ENCODE measurements at regions of chr2 and their contacts with region 1.

Region 1: GRCh38 chr2:152189622-152190495 is 14.3 kb upstream of the STAM2 start:
- DNase-seq: peak in 3 of 5 donors; percentile 28 to 36 (median 35)
- ATAC-seq: peak; percentile 42 to 85 (median 71)
- H3K4me3 ChIP-seq: no peak overlapping the region
- H3K27ac ChIP-seq: no peak overlapping the region
- H3K4me1 ChIP-seq: no peaks in the 10 kb centered on the region
- H3K27me3 ChIP-seq: no peaks in the 10 kb centered on the region
- CTCF ChIP-seq: peak; percentile 68 to 89 (median 86)
- POLR2A ChIP-seq: no peak

Region 2: GRCh38 chr2:152421521-152422370 is 231.9 kb after region 1 on chr2:
- intact Hi-C with region 1: loop called in 1 of 10 experiments (anchors 10 kb)
- DNase-seq: peak in 3 of 5 donors; percentile 33 to 37 (median 35)
- ATAC-seq: peak; percentile 80 to 97 (median 95)
- H3K4me3 ChIP-seq: no peak overlapping the region
- H3K27ac ChIP-seq: peak overlapping the region in 11 of 12 donors; percentile 6 to 88 (median 49)
- H3K4me1 ChIP-seq: peaks cover 3 to 50% (median 12%) of the 10 kb centered on the region in 12 donors
- H3K27me3 ChIP-seq: no peaks in the 10 kb centered on the region
- CTCF ChIP-seq: no peak
- POLR2A ChIP-seq: no peak

Region 3: GRCh38 chr2:152620208-152620607 is 430.3 kb after region 1 on chr2:
- intact Hi-C with region 1: loop called in 3 of 10 experiments (anchors 5 kb)
- DNase-seq: no peak
- ATAC-seq: no peak
- H3K4me3 ChIP-seq: no peak overlapping the region
- H3K27ac ChIP-seq: peak overlapping the region in 1 of 12 donors; percentile 61
- H3K4me1 ChIP-seq: no peaks in the 10 kb centered on the region
- H3K27me3 ChIP-seq: no peaks in the 10 kb centered on the region
- CTCF ChIP-seq: no peak
- POLR2A ChIP-seq: no peak

Region 4: DNA sequence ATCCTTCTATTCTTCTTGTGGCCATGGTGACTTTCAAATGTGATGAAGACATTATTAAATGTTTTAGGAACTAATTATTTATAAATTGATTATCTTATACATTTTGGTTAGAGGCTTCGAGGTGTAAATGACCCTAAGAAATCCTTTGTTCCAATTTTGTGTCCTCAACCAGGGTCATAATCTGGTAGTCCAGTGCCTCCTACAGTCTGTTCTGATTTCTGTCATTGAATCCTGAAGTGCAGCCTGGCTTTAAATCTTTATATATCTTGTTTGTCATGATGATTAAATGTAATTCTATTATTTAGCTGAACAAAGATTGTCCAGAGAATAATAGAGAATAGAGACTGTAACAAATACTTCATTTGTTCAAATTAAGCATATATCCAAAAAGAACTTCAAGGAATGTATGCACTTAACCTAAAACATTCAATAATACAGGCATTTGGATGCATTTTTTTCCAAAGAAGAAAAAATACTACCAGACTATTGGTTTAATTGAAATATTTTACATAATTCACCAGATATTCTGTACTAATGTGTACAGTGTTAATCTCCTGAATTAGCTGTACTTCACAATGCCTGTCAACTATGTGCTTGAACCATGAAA is 437.6 kb after region 1 on chr2:
- intact Hi-C with region 1: loop called in 8 of 10 experiments (anchors 2 to 5 kb)
- DNase-seq: no peak
- ATAC-seq: peak in 3 of 4 donors; percentile 57 to 71 (median 68)
- H3K4me3 ChIP-seq: no peak overlapping the region
- H3K27ac ChIP-seq: no peak overlapping the region
- H3K4me1 ChIP-seq: peaks cover 0 to 4% (median 0%) of the 10 kb centered on the region in 12 donors
- H3K27me3 ChIP-seq: no peaks in the 10 kb centered on the region
- CTCF ChIP-seq: peak; percentile 41 to 75 (median 62)
- POLR2A ChIP-seq: no peak

Region 5: GRCh38 chr2:152635635-152636298 is 445.9 kb after region 1 on chr2:
- intact Hi-C with region 1: loop called in 5 of 10 experiments (anchors 2 to 5 kb)
- DNase-seq: peak in 3 of 5 donors; percentile 39 to 54 (median 41)
- ATAC-seq: peak in 3 of 4 donors; percentile 55 to 63 (median 63)
- H3K4me3 ChIP-seq: no peak overlapping the region
- H3K27ac ChIP-seq: no peak overlapping the region
- H3K4me1 ChIP-seq: peaks cover 0 to 7% (median 0%) of the 10 kb centered on the region in 12 donors
- H3K27me3 ChIP-seq: no peaks in the 10 kb centered on the region
- CTCF ChIP-seq: peak; percentile 70 to 89 (median 80)
- POLR2A ChIP-seq: no peak

Region 6: GRCh38 chr2:152950126-152950525 is 760.3 kb after region 1 on chr2:
- intact Hi-C with region 1: no loop called
- DNase-seq: no peak
- ATAC-seq: no peak
- H3K4me3 ChIP-seq: no peak overlapping the region
- H3K27ac ChIP-seq: no peak overlapping the region
- H3K4me1 ChIP-seq: no peaks in the 10 kb centered on the region
- H3K27me3 ChIP-seq: no peaks in the 10 kb centered on the region
- CTCF ChIP-seq: no peak
- POLR2A ChIP-seq: no peak

Region 7: DNA sequence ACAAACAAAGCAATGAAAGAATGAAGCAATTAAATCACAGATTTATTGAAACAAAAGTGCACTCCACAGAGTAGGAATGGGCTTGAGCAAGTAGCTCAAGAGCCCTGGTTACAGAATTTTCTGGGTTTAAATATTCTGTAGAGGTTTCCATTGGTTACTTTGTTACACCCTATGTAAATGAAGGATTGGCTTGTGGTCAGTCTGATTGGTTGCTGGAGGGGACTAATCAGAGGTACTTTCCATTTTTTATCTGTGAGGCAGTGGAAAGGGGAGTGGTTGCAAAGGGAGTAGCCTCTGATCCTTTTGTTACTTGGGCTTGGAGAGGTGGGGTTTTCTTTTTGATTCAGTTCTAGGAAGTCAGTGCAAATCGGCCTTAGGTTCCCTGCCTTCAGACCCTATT is 781.8 kb after region 1 on chr2:
- intact Hi-C with region 1: no loop called
- DNase-seq: no peak
- ATAC-seq: no peak
- H3K4me3 ChIP-seq: no peak overlapping the region
- H3K27ac ChIP-seq: no peak overlapping the region
- H3K4me1 ChIP-seq: no peaks in the 10 kb centered on the region
- H3K27me3 ChIP-seq: no peaks in the 10 kb centered on the region
- CTCF ChIP-seq: no peak
- POLR2A ChIP-seq: no peak